ENCODE measurements at regions of chr2 and their contacts with region 1.

Region 1: GRCh38 chr2:201182650-201183364 is at the start of gene CASP10:
- DNase-seq: peak; percentile 32
- H3K4me3 Mint-ChIP-seq: peak within 1 kb of the TSS; percentile 97
- H3K27ac Mint-ChIP-seq: peak within 1 kb of the TSS; percentile 96
- H3K4me1 Mint-ChIP-seq: peaks cover 39% of the 10 kb centered on the region
- H3K27me3 Mint-ChIP-seq: no peaks in the 10 kb centered on the region
- total RNA-seq, gene CASP10: 22.0 to 22.1 TPM

Region 2: DNA sequence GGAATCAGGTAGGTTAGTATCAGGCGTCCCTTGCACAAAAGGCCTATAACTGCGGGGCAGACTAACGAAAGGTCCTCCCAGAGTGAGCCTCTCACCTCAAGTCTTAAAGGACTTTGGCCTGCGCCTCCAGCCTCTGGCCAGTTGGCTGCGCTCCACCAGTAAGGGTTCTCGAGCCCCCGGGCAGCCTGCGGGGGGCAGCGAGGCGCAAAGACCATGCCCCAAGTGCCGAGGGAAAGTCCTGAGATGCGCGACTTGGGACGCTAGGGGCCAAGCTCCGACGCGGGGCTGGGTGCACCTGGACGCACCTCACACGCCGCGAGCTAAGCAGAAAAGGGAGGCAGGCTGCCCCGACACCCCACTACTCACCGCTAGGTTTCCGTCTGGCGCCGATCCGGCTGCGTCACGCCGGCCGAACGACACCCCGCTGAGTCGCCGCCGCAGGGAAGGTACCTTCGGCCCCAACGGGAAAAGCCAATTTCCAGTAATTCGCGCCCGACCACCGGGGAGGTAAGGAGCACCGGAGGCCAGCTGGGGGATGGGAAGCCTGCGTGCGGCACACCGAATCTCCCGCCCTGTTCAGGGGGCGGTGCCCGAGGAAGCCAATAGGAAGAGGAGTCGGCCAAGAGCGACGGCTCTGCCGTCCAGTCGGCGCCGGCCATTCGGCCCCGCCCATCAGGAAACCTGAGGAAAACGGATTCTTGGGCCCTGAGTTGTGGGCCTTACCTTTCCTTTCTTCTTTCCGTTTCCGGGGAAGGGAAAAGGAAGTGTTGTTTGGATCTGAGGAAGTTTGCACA is 219.5 kb before region 1 on chr2 and contains the start of gene ORC2:
- CTCF ChIA-PET with region 1: interaction called, 6 read pairs
- intact Hi-C with region 1: loop called (anchors 1 kb)
- DNase-seq: peak; percentile 94
- H3K4me3 Mint-ChIP-seq: peak within 1 kb of the TSS; percentile 88
- H3K27ac Mint-ChIP-seq: peak within 1 kb of the TSS; percentile 94
- H3K4me1 Mint-ChIP-seq: peaks cover 56% of the 10 kb centered on the region
- H3K27me3 Mint-ChIP-seq: no peaks in the 10 kb centered on the region
- total RNA-seq, gene ORC2: 53.7 to 56.8 TPM

Region 3: DNA sequence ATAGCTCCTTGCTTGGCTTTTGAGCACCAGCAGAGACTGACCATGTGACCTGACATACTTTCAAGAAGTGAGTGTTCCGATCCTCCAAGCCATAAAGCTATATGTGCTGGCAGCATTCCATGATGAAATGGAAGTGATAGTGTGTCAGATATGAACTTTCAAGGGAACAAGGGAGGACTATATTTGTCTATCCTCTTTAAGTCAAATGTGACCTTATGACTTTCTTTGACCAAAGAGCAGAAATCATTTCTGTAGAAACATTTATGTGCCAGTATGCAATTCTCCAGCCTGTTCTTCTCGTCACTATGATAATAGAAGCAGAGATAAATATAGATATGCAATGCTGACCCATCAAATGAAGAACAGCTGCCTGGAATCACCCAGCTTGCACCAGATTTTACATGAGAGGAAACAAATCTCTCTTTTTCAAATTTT is 125.7 kb before region 1 on chr2:
- CTCF ChIA-PET with region 1: no interaction called
- intact Hi-C with region 1: no loop called
- DNase-seq: no peak
- H3K4me3 Mint-ChIP-seq: no peak overlapping the region
- H3K27ac Mint-ChIP-seq: no peak overlapping the region
- H3K4me1 Mint-ChIP-seq: peaks cover 21% of the 10 kb centered on the region
- H3K27me3 Mint-ChIP-seq: no peaks in the 10 kb centered on the region

Region 4: GRCh38 chr2:201194097-201194496 is 11.3 kb after region 1 on chr2:
- CTCF ChIA-PET with region 1: interaction called, 23 read pairs
- intact Hi-C with region 1: loop called (anchors 1 kb)
- DNase-seq: no peak
- H3K4me3 Mint-ChIP-seq: no peak overlapping the region
- H3K27ac Mint-ChIP-seq: peak overlapping the region; percentile 50
- H3K4me1 Mint-ChIP-seq: peaks cover 66% of the 10 kb centered on the region
- H3K27me3 Mint-ChIP-seq: no peaks in the 10 kb centered on the region

Region 5: GRCh38 chr2:201220102-201220570 is 37.3 kb after region 1 on chr2:
- CTCF ChIA-PET with region 1: interaction called, 15 read pairs
- intact Hi-C with region 1: no loop called
- DNase-seq: peak; percentile 43
- H3K4me3 Mint-ChIP-seq: no peak overlapping the region
- H3K27ac Mint-ChIP-seq: peak overlapping the region; percentile 74
- H3K4me1 Mint-ChIP-seq: peaks cover 58% of the 10 kb centered on the region
- H3K27me3 Mint-ChIP-seq: no peaks in the 10 kb centered on the region

Region 6: DNA sequence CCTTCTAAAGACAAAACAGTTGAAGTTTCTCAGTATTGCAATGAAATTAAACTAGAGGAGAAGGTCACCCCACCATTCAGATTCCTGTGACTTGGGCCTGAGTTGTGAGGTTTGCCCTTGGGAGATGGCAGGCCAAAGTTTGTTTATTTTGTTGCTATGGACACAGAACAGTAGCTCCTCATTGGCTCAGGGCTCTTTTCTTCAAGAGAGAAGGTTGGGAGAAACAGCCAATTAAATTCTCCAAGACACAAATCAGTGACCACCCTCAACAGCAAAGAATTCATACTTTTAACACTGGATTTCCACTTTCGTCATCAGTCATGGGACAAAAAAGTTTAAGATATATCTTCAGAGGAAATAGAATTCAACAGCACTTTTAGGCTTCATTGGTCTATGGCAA is 174.4 kb after region 1 on chr2 and contains the start of gene FLACC1:
- CTCF ChIA-PET with region 1: no interaction called
- intact Hi-C with region 1: no loop called
- DNase-seq: no peak
- H3K4me3 Mint-ChIP-seq: no peak within 1 kb of the TSS
- H3K27ac Mint-ChIP-seq: no peak within 1 kb of the TSS
- H3K4me1 Mint-ChIP-seq: peaks cover 10% of the 10 kb centered on the region
- H3K27me3 Mint-ChIP-seq: no peaks in the 10 kb centered on the region
- total RNA-seq, gene FLACC1: 0.57 to 0.84 TPM

Region 7: DNA sequence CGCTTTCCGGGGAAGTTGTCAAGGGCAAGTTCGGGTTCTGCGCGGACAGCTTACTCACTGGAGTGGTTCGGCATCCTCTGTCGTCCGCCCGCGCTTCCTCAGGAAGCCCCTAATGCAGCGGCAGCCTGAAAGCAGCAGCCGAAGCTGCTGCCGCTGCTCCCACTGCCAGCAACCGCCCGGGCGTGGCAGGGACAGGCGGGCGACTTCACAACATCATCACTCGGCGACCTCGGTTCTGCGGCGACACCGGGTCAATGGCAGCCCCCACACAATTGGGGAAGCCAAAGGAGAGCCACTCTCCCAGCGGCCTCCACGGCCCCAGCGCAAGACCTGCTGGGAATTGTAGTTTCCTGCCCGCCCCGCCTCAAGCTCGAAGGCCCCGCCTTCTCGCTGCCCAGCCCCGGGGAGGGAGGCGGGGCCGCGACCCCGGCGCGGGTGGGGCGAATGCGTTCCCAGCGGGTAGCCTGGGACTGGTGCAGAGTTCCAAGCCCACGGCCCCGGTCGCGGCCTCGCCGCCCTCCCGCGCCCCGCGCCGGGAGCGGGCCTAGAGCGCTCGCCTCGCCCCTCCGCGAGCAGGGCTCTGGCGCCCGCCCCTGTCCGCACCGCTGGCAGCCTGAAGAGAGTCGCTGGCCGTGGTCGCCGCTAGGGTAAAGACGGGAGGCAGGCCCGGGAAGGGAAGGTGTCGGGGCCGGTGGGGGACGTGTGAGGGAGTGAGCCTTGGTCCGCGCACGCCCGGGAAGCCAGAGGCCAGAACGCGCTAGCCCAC is 268.7 kb after region 1 on chr2 and contains the starts of genes STRADB and TRAK2:
- CTCF ChIA-PET with region 1: no interaction called
- intact Hi-C with region 1: loop called (anchors 5 kb)
- DNase-seq: peak; percentile 96
- H3K4me3 Mint-ChIP-seq: peak within 1 kb of the TSS; percentile 95
- H3K27ac Mint-ChIP-seq: peak within 1 kb of the TSS; percentile 94
- H3K4me1 Mint-ChIP-seq: peaks cover 51% of the 10 kb centered on the region
- H3K27me3 Mint-ChIP-seq: no peaks in the 10 kb centered on the region
- total RNA-seq, gene STRADB: 17.6 to 19.1 TPM
- total RNA-seq, gene TRAK2: 10.4 TPM

Region 8: GRCh38 chr2:201780674-201781581 is 598.1 kb after region 1 on chr2 and contains the start of gene ALS2:
- CTCF ChIA-PET with region 1: no interaction called
- intact Hi-C with region 1: loop called (anchors 5 kb)
- DNase-seq: peak; percentile 96
- H3K4me3 Mint-ChIP-seq: peak within 1 kb of the TSS; percentile 86
- H3K27ac Mint-ChIP-seq: peak within 1 kb of the TSS; percentile 83
- H3K4me1 Mint-ChIP-seq: peaks cover 13% of the 10 kb centered on the region
- H3K27me3 Mint-ChIP-seq: peaks cover 3% of the 10 kb centered on the region
- total RNA-seq, gene ALS2: 9.4 to 11.2 TPM